Activated CD8-positive, alpha-beta memory T cell treated with anti-CD3 and anti-CD28 coated beads, Interleukin-2, amount 10 ng/mL, durations not matched to agents 7 days and 5 days (primary cell): ENCODE measurements at regions of chr12 and their contacts with region 1.

Region 1: DNA sequence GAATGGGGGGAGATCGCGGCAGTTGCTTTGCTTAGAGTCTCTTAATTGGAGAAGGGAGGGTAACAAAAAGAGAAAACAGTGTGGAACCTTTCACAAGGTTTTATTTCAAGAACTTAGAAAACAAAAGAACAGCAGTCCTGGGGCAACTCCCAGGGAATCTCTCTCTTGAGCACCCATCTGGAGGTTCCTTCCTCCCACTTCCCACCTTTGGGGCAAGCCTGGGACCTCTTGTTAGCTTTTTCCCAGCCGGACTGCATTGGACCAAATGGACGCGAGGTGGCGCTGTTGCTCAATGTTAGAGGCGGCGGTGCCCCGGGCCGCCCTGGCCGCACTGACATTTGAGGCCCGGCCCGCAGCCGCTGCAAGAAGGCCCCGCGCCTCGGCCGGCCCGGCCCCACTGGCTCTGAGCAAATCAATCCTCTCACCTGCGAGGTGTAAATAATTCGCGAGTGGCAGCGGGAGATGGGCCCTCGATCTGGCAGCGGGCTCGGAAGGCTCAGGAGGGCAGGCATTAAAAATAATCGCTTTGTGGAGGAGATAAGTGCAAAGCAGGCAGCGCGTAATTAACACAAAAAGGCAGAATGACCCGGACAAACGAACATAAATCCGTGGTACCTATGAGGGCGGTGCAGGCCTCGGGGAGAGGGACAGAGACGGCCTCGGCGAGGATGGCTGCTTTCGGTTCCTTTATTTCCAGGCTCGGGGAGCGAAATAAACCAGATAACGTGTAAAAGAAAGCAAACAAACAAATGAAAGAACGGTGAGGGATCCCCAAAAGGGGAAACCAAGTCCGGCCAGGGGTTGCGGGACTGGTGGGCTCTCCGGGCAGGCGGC is 2.7 kb upstream of the HOXC8 start:
- DNase-seq: peak; percentile 87
- ATAC-seq: peak; percentile 88
- H3K4me3 Mint-ChIP-seq: peak overlapping the region; percentile 64
- H3K27ac Mint-ChIP-seq: no peak overlapping the region
- H3K4me1 Mint-ChIP-seq: peaks cover 15% of the 10 kb centered on the region
- H3K27me3 Mint-ChIP-seq: peaks cover 95% of the 10 kb centered on the region

Region 2: GRCh38 chr12:53924521-53925405 is 81.3 kb before region 1 on chr12:
- CTCF ChIA-PET with region 1: no interaction called
- DNase-seq: no peak
- ATAC-seq: no peak
- H3K4me3 Mint-ChIP-seq: no peak overlapping the region
- H3K27ac Mint-ChIP-seq: no peak overlapping the region
- H3K4me1 Mint-ChIP-seq: no peaks in the 10 kb centered on the region
- H3K27me3 Mint-ChIP-seq: peaks cover 93% of the 10 kb centered on the region

Region 3: DNA sequence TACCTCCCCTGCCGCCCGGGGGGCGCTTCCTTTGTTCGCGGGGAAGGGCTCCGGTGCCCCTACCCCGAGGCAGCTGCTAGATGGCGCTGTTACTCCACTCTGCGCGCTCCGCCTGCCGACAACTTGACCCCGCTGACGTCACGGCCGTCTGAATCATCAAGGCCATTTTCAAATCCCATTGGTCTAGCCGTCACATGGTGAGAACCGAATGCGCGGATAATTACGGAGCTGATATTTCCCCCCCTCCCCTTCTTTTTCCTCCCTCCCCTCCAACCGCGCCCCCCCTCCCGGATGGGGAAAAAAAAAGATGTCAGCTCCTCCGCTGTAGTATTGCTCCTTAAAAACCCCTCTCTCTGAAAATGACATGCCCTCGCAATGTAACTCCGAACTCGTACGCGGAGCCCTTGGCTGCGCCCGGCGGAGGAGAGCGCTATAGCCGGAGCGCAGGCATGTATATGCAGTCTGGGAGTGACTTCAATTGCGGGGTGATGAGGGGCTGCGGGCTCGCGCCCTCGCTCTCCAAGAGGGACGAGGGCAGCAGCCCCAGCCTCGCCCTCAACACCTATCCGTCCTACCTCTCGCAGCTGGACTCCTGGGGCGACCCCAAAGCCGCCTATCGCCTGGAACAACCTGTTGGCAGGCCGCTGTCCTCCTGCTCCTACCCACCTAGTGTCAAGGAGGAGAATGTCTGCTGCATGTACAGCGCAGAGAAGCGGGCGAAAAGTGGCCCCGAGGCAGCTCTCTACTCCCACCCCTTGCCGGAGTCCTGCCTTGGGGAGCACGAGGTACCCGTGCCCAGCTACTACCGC is 21.0 kb before region 1 on chr12 and contains the start of gene HOXC10:
- CTCF ChIA-PET with region 1: interaction called, 41 read pairs
- DNase-seq: peak; percentile 89
- ATAC-seq: peak; percentile 67
- H3K4me3 Mint-ChIP-seq: no peak within 1 kb of the TSS
- H3K27ac Mint-ChIP-seq: peak within 1 kb of the TSS; percentile 28
- H3K4me1 Mint-ChIP-seq: peaks cover 24% of the 10 kb centered on the region
- H3K27me3 Mint-ChIP-seq: peaks cover 97% of the 10 kb centered on the region
- total RNA-seq, gene HOXC10: not detected

Region 4: GRCh38 chr12:54017878-54018467 is 11.9 kb after region 1 on chr12:
- CTCF ChIA-PET with region 1: interaction called, 44 read pairs
- DNase-seq: peak; percentile 87
- ATAC-seq: peak; percentile 96
- H3K4me3 Mint-ChIP-seq: peak overlapping the region; percentile 74
- H3K27ac Mint-ChIP-seq: peak overlapping the region; percentile 58
- H3K4me1 Mint-ChIP-seq: peaks cover 15% of the 10 kb centered on the region
- H3K27me3 Mint-ChIP-seq: peaks cover 81% of the 10 kb centered on the region

Region 5: GRCh38 chr12:54024127-54024526 is 18.1 kb after region 1 on chr12:
- CTCF ChIA-PET with region 1: interaction called, 74 read pairs
- DNase-seq: no peak
- ATAC-seq: no peak
- H3K4me3 Mint-ChIP-seq: no peak overlapping the region
- H3K27ac Mint-ChIP-seq: no peak overlapping the region
- H3K4me1 Mint-ChIP-seq: peaks cover 5% of the 10 kb centered on the region
- H3K27me3 Mint-ChIP-seq: peaks cover 93% of the 10 kb centered on the region

Region 6: DNA sequence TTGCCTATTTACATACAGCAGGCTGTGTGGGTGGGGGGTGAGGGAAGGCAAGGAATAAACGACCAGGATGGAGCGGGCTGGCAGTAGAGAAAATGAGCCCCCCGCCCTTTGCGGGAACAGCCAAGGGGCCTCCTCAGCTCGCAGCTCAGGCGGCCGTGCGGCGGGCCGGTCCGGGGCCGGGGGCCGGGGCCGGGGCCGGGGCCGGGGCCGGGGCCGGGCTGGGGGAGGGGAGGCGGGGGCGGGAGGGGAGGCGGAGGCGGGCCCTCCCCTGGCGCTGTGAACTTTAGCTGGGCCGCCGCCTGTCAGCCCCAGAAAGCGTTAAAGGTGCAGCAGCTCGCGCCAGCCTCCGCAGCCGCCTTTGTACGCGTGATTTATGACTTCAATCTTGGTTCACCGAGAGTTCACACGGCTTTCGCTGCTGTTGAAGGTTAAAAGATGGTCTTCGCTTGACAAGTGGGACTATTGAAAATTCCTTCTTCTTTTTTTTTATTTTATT is 76.4 kb after region 1 on chr12:
- CTCF ChIA-PET with region 1: no interaction called
- DNase-seq: peak; percentile 62
- ATAC-seq: peak; percentile 55
- H3K4me3 Mint-ChIP-seq: peak overlapping the region; percentile 79
- H3K27ac Mint-ChIP-seq: peak overlapping the region; percentile 94
- H3K4me1 Mint-ChIP-seq: peaks cover 18% of the 10 kb centered on the region
- H3K27me3 Mint-ChIP-seq: peaks cover 14% of the 10 kb centered on the region

Region 7: DNA sequence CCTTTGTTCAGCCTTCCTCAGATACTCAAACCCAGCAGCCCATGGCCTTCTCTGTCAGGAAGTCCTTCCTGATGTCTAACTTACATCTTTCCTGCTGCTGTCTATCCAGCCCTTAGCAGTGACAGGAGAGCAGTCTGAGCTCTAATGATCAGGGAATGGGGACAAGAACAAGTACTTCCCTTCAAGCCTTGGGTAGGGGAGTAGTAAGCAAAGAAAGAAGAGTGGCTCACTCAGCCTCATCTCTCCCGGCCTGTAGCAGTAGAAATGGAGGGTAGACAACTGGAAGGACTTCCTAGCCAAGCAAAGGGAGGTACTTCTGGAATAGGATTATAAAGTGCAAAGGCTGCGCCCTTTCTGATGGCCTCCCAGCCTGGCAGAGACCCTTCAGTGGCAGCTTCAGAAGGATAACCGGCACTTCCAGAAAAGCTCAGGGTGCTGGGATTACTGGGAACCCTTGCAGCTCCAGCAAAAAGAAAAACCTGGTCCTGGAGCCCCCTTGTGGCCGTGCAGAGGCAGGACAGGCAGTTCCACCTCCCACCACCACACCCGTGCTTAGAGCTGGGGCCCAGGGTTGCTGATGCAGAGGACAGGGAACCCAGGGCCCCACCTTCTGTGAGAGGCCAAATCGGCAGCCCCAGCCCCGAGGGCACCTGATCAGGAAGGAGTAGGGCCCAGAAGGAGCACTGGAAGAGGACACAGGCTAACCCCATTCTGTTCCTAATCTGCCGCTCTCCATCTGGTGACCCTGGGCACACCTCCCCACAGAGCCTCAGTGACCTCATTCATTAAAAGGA is 195.1 kb after region 1 on chr12:
- CTCF ChIA-PET with region 1: interaction called, 94 read pairs
- DNase-seq: peak; percentile 69
- ATAC-seq: peak; percentile 89
- H3K4me3 Mint-ChIP-seq: no peak overlapping the region
- H3K27ac Mint-ChIP-seq: no peak overlapping the region
- H3K4me1 Mint-ChIP-seq: no peaks in the 10 kb centered on the region
- H3K27me3 Mint-ChIP-seq: peaks cover 62% of the 10 kb centered on the region

Region 8: DNA sequence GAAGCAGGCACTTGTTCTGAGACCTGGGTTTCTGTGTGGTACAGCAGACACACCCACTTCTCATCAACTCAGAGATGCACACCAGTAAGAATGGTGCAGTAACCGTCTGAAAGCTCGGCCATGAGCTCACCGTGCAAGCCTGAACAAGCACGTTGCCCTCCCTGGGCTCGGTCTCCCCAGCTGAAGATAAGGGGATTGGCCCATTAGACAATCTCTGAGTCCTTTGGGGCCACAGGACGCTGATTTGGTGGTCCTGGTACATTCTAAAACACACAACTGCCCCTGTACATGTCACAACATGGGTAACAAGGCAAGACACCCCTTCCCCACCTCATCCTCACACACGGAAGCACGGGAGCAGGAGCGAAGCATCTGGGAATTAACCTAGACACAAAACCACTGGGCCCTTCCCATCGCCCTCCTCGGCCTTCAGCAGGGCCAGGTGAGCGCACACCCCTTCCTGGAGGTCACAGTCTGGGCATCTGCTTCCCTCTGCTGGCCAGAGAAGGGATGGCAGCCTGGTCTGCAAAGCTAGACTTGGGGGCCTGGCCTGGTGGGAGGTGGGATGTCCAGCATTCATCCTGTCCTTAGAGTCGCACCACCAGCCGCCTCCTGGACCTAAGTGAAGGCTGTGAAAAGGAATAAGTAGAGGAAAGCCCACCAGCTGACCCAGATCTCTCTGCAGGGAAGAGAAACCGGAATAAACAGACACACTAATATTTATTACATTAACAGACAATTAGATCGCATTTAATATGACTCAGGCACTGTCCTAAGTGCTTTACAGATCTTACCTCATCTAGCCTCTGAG is 201.6 kb after region 1 on chr12:
- CTCF ChIA-PET with region 1: interaction called, 94 read pairs
- DNase-seq: peak; percentile 87
- ATAC-seq: peak; percentile 92
- H3K4me3 Mint-ChIP-seq: no peak overlapping the region
- H3K27ac Mint-ChIP-seq: no peak overlapping the region
- H3K4me1 Mint-ChIP-seq: peaks cover 2% of the 10 kb centered on the region
- H3K27me3 Mint-ChIP-seq: peaks cover 34% of the 10 kb centered on the region

Region 9: GRCh38 chr12:54214553-54215406 is 208.7 kb after region 1 on chr12:
- CTCF ChIA-PET with region 1: interaction called, 94 read pairs
- DNase-seq: peak; percentile 95
- ATAC-seq: peak; percentile 90
- H3K4me3 Mint-ChIP-seq: peak overlapping the region; percentile 61
- H3K27ac Mint-ChIP-seq: peak overlapping the region; percentile 18
- H3K4me1 Mint-ChIP-seq: peaks cover 36% of the 10 kb centered on the region
- H3K27me3 Mint-ChIP-seq: peaks cover 7% of the 10 kb centered on the region